ENCODE measurements at regions of chr6 and their contacts with region 1.

Region 1: GRCh38 chr6:127266178-127266891 is at the start of gene RNF146:
- DNase-seq: peak; percentile 89
- ATAC-seq: peak; percentile 71
- H3K4me3 ChIP-seq: peak within 1 kb of the TSS; percentile 74 to 94 (median 93)
- H3K4me3 Mint-ChIP-seq: peak within 1 kb of the TSS; percentile 98
- H3K27ac ChIP-seq: peak within 1 kb of the TSS; percentile 94 to 98
- H3K27ac Mint-ChIP-seq: peak within 1 kb of the TSS; percentile 95
- H3K4me1 ChIP-seq: peaks cover 16 to 25% of the 10 kb centered on the region in 2 donors
- H3K4me1 Mint-ChIP-seq: peaks cover 39% of the 10 kb centered on the region
- H3K27me3 ChIP-seq: peaks cover 0 to 3% (median 0%) of the 10 kb centered on the region in 4 experiments
- H3K27me3 Mint-ChIP-seq: peaks cover 4% of the 10 kb centered on the region
- CTCF ChIP-seq: peak; percentile 76
- total RNA-seq, gene RNF146: 55.9 and 58.0 TPM in 2 replicates

Region 2: DNA sequence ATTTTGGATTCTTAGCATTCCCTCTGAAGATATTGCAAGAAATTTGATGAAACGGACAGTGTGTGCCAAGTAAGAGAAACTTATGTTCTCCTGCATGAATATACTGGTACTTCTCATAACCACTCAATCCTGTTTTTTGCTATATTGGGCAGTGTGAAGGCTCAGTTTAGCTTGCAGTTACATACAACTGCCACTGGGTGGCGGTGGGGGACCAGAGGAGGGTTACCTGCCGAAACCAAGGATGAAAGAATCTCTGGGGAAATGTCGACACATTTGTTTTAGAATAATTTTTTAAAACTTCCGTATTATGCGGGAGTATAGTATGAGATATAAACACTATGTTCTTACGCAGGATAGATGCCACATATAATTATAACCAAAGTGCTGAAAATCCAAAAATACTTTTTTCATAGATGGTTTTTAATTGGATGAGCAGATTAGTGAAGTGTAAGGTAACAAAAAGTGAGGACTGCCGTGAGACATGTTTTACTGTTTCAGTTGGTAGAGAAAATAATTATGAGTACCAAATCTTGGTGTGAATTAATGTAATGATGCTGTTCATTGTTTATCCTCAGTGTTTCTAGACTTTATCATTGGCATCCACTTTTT is 1270.3 kb before region 1 on chr6:
- CTCF ChIA-PET with region 1: no interaction called
- POLR2A ChIA-PET with region 1: no interaction called
- intact Hi-C with region 1: loop called (anchors 5 kb)
- DNase-seq: peak; percentile 81
- ATAC-seq: peak; percentile 99
- H3K4me3 ChIP-seq: peak overlapping the region in 2 of 5 experiments; percentile 31 to 56
- H3K4me3 Mint-ChIP-seq: peak overlapping the region; percentile 78
- H3K27ac ChIP-seq: no peak overlapping the region
- H3K27ac Mint-ChIP-seq: no peak overlapping the region
- H3K4me1 ChIP-seq: peaks cover 0 to 4% of the 10 kb centered on the region in 2 donors
- H3K4me1 Mint-ChIP-seq: peaks cover 8% of the 10 kb centered on the region
- H3K27me3 ChIP-seq: no peaks in the 10 kb centered on the region
- H3K27me3 Mint-ChIP-seq: no peaks in the 10 kb centered on the region
- CTCF ChIP-seq: peak; percentile 100

Region 3: GRCh38 chr6:127186889-127187288 is 79.4 kb before region 1 on chr6:
- CTCF ChIA-PET with region 1: interaction called, 10 read pairs
- POLR2A ChIA-PET with region 1: no interaction called
- intact Hi-C with region 1: no loop called
- DNase-seq: peak; percentile 20
- ATAC-seq: no peak
- H3K4me3 ChIP-seq: no peak overlapping the region
- H3K4me3 Mint-ChIP-seq: no peak overlapping the region
- H3K27ac ChIP-seq: no peak overlapping the region
- H3K27ac Mint-ChIP-seq: no peak overlapping the region
- H3K4me1 ChIP-seq: no peaks in the 10 kb centered on the region
- H3K4me1 Mint-ChIP-seq: no peaks in the 10 kb centered on the region
- H3K27me3 ChIP-seq: no peaks in the 10 kb centered on the region
- H3K27me3 Mint-ChIP-seq: peaks cover 3% of the 10 kb centered on the region
- CTCF ChIP-seq: peak; percentile 49

Region 4: GRCh38 chr6:127342946-127343808 is 76.8 kb after region 1 on chr6 and contains the start of gene ECHDC1:
- CTCF ChIA-PET with region 1: interaction called, 7 read pairs
- POLR2A ChIA-PET with region 1: no interaction called
- intact Hi-C with region 1: loop called (anchors 1 kb)
- DNase-seq: peak; percentile 80
- ATAC-seq: peak; percentile 69
- H3K4me3 ChIP-seq: peak within 1 kb of the TSS; percentile 70 to 97 (median 94)
- H3K4me3 Mint-ChIP-seq: no peak within 1 kb of the TSS
- H3K27ac ChIP-seq: peak within 1 kb of the TSS; percentile 63 to 77
- H3K27ac Mint-ChIP-seq: no peak within 1 kb of the TSS
- H3K4me1 ChIP-seq: peaks cover 37 to 47% of the 10 kb centered on the region in 2 donors
- H3K4me1 Mint-ChIP-seq: peaks cover 24% of the 10 kb centered on the region
- H3K27me3 ChIP-seq: no peaks in the 10 kb centered on the region
- H3K27me3 Mint-ChIP-seq: no peaks in the 10 kb centered on the region
- CTCF ChIP-seq: no peak
- total RNA-seq, gene ECHDC1: 60.0 and 60.5 TPM in 2 replicates

Region 5: DNA sequence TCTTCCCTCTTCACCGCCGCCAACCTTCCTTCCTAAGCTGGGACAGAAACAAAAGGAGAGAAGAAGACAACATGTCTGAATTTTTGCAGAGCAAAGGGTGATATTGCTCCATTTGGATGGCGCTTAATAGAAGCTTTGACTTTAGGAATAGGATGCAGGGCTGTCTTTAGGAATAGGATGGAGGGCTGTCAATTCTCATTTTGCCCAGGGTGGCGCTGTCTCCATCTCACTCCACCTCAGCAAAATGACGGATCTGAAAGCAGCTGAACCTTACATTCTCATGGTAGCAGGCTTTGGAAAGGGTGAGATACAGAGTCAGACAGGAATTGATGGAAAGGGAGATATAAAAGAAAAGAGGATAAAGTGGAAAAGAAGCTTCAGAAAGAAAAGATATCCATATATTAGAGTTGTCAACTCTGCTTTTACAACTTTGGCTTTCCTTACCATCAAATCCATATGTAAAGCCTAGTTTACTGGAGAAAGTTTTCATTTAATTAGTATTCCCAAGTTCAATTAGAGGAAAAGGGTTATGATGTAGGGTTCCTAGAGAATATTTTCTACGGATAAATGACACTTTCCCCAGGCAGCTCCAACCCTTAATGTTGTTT is 250.4 kb after region 1 on chr6:
- CTCF ChIA-PET with region 1: interaction called, 7 read pairs
- POLR2A ChIA-PET with region 1: no interaction called
- intact Hi-C with region 1: loop called (anchors 2 kb)
- DNase-seq: peak; percentile 57
- ATAC-seq: peak; percentile 28
- H3K4me3 ChIP-seq: peak overlapping the region; percentile 30 to 72 (median 58)
- H3K4me3 Mint-ChIP-seq: peak overlapping the region; percentile 90
- H3K27ac ChIP-seq: no peak overlapping the region
- H3K27ac Mint-ChIP-seq: peak overlapping the region; percentile 4
- H3K4me1 ChIP-seq: peaks cover 24 to 36% of the 10 kb centered on the region in 2 donors
- H3K4me1 Mint-ChIP-seq: peaks cover 23% of the 10 kb centered on the region
- H3K27me3 ChIP-seq: peaks cover 2 to 57% (median 45%) of the 10 kb centered on the region in 4 experiments
- H3K27me3 Mint-ChIP-seq: peaks cover 53% of the 10 kb centered on the region
- CTCF ChIP-seq: peak; percentile 78

Measured in B cell (primary cell).